Activated B cell treated with CpG ODN at 0.5 μM for 24 hours (primary cell): ENCODE measurements at regions of chr20 and their contacts with region 1.

Region 1: GRCh38 chr20:34558320-34559218 is at the start of gene MAP1LC3A:
- DNase-seq: peak; percentile 91
- ATAC-seq: peak; percentile 81
- H3K4me3 Mint-ChIP-seq: peak within 1 kb of the TSS; percentile 85
- H3K27ac Mint-ChIP-seq: peak within 1 kb of the TSS; percentile 53
- H3K4me1 Mint-ChIP-seq: peaks cover 21% of the 10 kb centered on the region
- H3K27me3 Mint-ChIP-seq: no peaks in the 10 kb centered on the region
- CTCF ChIP-seq: no peak
- total RNA-seq, gene MAP1LC3A: 1.6 TPM in 2 replicates

Region 2: DNA sequence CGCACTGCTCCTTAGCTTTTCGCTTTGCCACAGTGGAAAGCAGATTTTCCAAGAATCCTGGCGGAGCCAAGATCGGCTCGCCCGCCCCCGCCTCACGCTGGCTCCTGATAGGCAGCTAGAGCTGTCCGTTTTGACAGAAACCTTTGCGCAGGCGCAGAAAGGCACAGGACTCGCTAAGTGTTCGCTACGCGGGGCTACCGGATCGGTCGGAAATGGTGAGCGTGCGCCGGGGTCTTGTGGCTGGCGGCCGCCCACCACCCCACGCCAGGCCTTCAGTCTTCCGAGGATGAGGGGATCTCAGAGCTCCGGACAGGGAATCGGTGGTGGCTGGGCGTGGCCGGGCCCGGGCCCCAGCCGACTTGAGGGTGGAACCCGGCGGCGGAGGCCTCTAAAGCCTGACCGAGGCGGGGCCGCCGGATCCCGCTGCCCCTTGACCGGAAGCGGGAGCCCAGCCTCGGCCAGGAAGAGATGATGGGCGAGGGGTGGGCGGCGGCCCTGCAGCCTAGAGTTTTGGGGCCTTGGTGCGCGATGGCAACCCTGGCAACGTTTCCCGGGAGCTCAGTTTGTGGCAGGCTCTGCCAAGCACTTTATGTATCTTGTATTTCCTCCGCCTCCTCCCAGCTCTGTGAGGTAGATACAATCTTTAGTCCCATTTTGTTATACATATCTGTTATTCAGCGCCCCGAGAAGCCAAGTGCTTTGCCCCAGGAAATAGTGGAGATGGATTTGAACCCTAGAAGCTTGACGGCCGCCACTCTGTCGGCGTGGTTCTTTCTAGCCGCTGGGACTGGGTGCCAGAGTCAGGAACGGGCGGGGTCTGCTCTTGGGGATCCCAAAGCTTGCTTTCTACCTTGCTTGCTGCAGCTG is 42.1 kb before region 1 on chr20 and contains the start of gene DYNLRB1:
- CTCF ChIA-PET with region 1: no interaction called
- POLR2A ChIA-PET with region 1: interaction called, 3 read pairs
- intact Hi-C with region 1: loop called (anchors 2 kb)
- DNase-seq: peak; percentile 88
- ATAC-seq: peak; percentile 82
- H3K4me3 Mint-ChIP-seq: peak within 1 kb of the TSS; percentile 98
- H3K27ac Mint-ChIP-seq: peak within 1 kb of the TSS; percentile 96
- H3K4me1 Mint-ChIP-seq: peaks cover 48% of the 10 kb centered on the region
- H3K27me3 Mint-ChIP-seq: no peaks in the 10 kb centered on the region
- CTCF ChIP-seq: no peak
- total RNA-seq, gene DYNLRB1: 62.7 and 65.9 TPM in 2 replicates

Region 3: GRCh38 chr20:34537651-34538050 is 20.9 kb before region 1 on chr20:
- CTCF ChIA-PET with region 1: no interaction called
- POLR2A ChIA-PET with region 1: no interaction called
- intact Hi-C with region 1: no loop called
- DNase-seq: no peak
- ATAC-seq: no peak
- H3K4me3 Mint-ChIP-seq: no peak overlapping the region
- H3K27ac Mint-ChIP-seq: no peak overlapping the region
- H3K4me1 Mint-ChIP-seq: peaks cover 12% of the 10 kb centered on the region
- H3K27me3 Mint-ChIP-seq: no peaks in the 10 kb centered on the region
- CTCF ChIP-seq: no peak

Region 4: DNA sequence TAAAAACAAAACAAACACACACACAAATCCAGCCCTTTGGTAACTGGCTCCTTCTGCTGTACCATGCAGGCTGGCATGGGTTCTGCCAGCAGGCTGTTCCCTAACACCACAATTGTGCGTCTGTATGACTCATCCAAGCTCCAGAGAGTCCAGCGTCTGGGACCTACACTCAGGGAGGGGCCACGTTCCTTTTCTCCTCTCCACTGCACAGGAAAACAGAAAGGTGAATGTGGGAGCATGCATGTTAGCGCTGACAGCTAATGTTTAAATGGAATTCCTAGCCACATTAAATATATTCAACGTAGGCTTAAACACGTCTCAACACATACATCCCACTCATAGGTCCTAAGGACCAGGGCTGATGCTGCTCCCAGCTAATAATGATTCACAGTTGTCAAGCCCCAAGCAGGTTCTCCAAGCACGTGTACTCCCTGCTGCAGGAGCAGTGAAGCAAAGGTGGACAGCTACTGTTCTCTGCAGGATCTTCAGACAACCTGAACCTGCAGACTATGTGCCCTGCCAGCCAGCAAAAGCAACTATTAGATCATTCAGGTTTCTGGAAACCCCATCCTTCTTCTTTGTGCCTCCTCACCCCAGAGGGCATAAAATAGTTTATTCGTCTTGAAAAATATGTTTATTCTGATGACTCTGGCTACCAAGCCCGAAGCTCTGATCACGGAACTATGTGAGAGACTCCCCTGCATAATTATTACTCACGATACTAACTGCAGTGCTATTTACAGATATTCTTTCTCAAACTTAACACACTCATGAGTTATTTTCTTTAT is 20.8 kb after region 1 on chr20:
- CTCF ChIA-PET with region 1: no interaction called
- POLR2A ChIA-PET with region 1: no interaction called
- intact Hi-C with region 1: no loop called
- DNase-seq: no peak
- ATAC-seq: no peak
- H3K4me3 Mint-ChIP-seq: no peak overlapping the region
- H3K27ac Mint-ChIP-seq: peak overlapping the region; percentile 73
- H3K4me1 Mint-ChIP-seq: peaks cover 36% of the 10 kb centered on the region
- H3K27me3 Mint-ChIP-seq: no peaks in the 10 kb centered on the region
- CTCF ChIP-seq: no peak